Common myeloid progenitor, CD34-positive (primary cell): ENCODE measurements at regions of chr2 and their contacts with region 1.

Region 1: GRCh38 chr2:43024515-43025011 is 201.8 kb downstream of the ZFP36L2 start:
- DNase-seq: peak; percentile 41 to 63 (median 52)
- H3K4me3 ChIP-seq: no peak overlapping the region
- H3K27ac ChIP-seq: no peak overlapping the region
- H3K4me1 ChIP-seq: peaks cover 2 to 34% (median 29%) of the 10 kb centered on the region in 4 experiments
- H3K27me3 ChIP-seq: no peaks in the 10 kb centered on the region

Region 2: GRCh38 chr2:43010438-43011157 is 14.0 kb before region 1 on chr2:
- CTCF ChIA-PET with region 1: interaction called, 53 read pairs
- POLR2A ChIA-PET with region 1: interaction called, 3 read pairs
- DNase-seq: peak in 2 of 3 donors; percentile 53 to 63
- H3K4me3 ChIP-seq: no peak overlapping the region
- H3K27ac ChIP-seq: no peak overlapping the region
- H3K4me1 ChIP-seq: peaks cover 11 to 60% (median 36%) of the 10 kb centered on the region in 4 experiments
- H3K27me3 ChIP-seq: no peaks in the 10 kb centered on the region